ENCODE measurements at regions of chr20 and their contacts with region 1.

Region 1: GRCh38 chr20:50575847-50576720 is 65.9 kb downstream of the PTPN1 start:
- DNase-seq: peak; percentile 34 to 67 (median 58)
- ATAC-seq: peak; percentile 92
- H3K4me3 ChIP-seq: no peak overlapping the region
- H3K4me3 Mint-ChIP-seq: no peak overlapping the region
- H3K27ac ChIP-seq: no peak overlapping the region
- H3K27ac Mint-ChIP-seq: peak overlapping the region in 8 of 9 donors; percentile 12 to 77 (median 56)
- H3K4me1 ChIP-seq: peaks cover 0 to 1% of the 10 kb centered on the region in 2 donors
- H3K4me1 Mint-ChIP-seq: peaks cover 12 to 40% (median 31%) of the 10 kb centered on the region in 7 donors
- H3K27me3 ChIP-seq: no peaks in the 10 kb centered on the region
- H3K27me3 Mint-ChIP-seq: no peaks in the 10 kb centered on the region

Region 2: GRCh38 chr20:50478162-50479036 is 97.7 kb before region 1 on chr20:
- CTCF ChIA-PET with region 1: interaction called, 41 read pairs
- POLR2A ChIA-PET with region 1: interaction called, 3 read pairs
- intact Hi-C with region 1: loop called (anchors 1 kb)
- DNase-seq: peak; percentile 50 to 81 (median 73)
- ATAC-seq: peak; percentile 100
- H3K4me3 ChIP-seq: no peak overlapping the region
- H3K4me3 Mint-ChIP-seq: peak overlapping the region in 1 of 10 donors; percentile 19
- H3K27ac ChIP-seq: no peak overlapping the region
- H3K27ac Mint-ChIP-seq: peak overlapping the region in 1 of 9 donors; percentile 9
- H3K4me1 ChIP-seq: peaks cover 8 to 14% of the 10 kb centered on the region in 2 donors
- H3K4me1 Mint-ChIP-seq: peaks cover 8 to 41% (median 19%) of the 10 kb centered on the region in 7 donors
- H3K27me3 ChIP-seq: no peaks in the 10 kb centered on the region
- H3K27me3 Mint-ChIP-seq: no peaks in the 10 kb centered on the region

Region 3: DNA sequence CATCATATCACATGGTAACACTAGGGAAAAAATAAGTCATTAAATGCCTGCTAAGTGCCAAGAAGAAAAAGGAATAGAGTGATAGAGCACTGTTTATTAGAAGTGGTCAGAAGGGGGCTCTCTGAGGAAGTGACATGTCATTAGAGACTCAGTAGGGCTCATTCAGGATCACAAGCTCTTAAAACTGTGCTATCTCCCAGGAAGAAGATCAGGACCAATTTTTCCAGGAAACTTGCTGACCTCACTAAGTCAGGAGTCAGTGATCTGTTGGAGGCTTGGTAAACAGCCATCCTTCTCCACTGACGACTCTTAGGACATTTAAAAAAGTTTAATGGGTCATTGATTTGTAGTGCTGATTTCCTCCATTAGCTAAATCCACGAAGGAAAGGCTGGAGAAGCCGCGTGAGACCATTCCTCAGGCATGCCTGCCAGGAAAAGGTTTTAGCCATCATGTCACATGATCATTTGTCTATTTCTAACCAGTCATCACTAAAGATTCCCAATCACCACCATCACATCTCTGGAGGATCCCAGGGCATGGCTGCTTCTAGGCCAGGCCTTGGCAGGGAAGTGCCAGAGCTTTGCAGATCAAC is 71.8 kb before region 1 on chr20:
- CTCF ChIA-PET with region 1: interaction called, 67 read pairs
- POLR2A ChIA-PET with region 1: interaction called, 45 read pairs
- intact Hi-C with region 1: loop called in 1 of 2 experiments (anchors 1 kb)
- DNase-seq: no peak
- ATAC-seq: peak; percentile 39
- H3K4me3 ChIP-seq: no peak overlapping the region
- H3K4me3 Mint-ChIP-seq: no peak overlapping the region
- H3K27ac ChIP-seq: no peak overlapping the region
- H3K27ac Mint-ChIP-seq: peak overlapping the region in 1 of 9 donors; percentile 60
- H3K4me1 ChIP-seq: no peaks in the 10 kb centered on the region
- H3K4me1 Mint-ChIP-seq: peaks cover 0 to 23% (median 8%) of the 10 kb centered on the region in 7 donors
- H3K27me3 ChIP-seq: no peaks in the 10 kb centered on the region
- H3K27me3 Mint-ChIP-seq: no peaks in the 10 kb centered on the region